ENCODE measurements at regions of chr1 and their contacts with region 1.

Region 1: DNA sequence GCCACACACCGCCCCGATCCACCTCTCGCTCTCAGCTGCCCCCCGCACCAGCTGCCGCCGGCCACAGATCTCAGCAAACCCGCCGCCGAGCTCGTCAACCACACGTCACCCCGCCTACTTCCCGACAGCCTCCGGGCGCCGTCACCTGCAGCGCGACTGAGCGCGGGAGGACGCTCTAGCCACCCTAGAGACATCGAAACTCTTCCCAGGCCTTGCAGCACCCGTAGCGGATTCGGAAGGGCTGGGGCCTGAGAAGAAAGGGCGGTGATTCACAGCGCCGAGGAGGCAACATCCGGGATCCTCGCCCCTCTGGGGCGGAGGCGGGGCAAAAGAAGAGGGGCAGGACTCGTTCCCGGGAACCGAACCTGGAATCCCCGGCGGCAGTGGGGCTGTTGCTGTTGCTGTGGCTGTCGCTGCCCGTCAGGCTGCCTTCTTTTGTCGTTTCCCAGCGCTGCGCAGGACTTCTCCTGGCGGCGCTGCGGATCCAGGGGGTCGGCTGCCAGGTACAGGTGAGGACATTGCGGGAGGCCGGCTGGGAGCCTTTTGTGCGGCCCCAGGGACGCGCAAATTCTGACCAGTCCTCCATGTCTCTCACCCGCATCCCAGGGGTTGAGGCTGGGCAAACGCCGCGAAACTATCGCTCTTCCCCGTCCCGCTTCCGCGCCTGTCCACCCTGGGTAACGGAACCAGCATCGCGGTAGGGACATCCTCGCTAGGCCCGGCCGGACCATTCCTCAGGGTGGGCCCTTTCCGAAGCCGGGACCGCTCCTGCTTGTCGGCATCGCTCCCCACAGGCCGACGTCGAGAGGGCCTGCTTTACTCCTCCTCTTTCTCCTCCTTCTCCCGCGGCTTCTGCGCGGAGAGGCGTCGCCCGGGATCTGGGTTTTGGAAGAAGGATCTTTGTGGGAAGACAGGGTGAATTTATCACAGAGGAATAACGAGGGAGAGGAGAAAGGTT is at the starts of genes RO60 and UCHL5:
- DNase-seq: peak; percentile 97
- H3K4me3 Mint-ChIP-seq: peak within 1 kb of the TSS; percentile 94
- H3K27ac Mint-ChIP-seq: peak within 1 kb of the TSS; percentile 97
- H3K4me1 Mint-ChIP-seq: peaks cover 59% of the 10 kb centered on the region
- H3K27me3 Mint-ChIP-seq: no peaks in the 10 kb centered on the region
- total RNA-seq, gene RO60: 42.8 to 48.0 TPM
- total RNA-seq, gene UCHL5: 63.4 to 68.8 TPM

Region 2: GRCh38 chr1:192639607-192640368 is 419.8 kb before region 1 on chr1:
- CTCF ChIA-PET with region 1: no interaction called
- intact Hi-C with region 1: loop called (anchors 1 kb)
- DNase-seq: peak; percentile 12
- H3K4me3 Mint-ChIP-seq: no peak overlapping the region
- H3K27ac Mint-ChIP-seq: no peak overlapping the region
- H3K4me1 Mint-ChIP-seq: peaks cover 18% of the 10 kb centered on the region
- H3K27me3 Mint-ChIP-seq: peaks cover 7% of the 10 kb centered on the region

Region 3: GRCh38 chr1:192983349-192983980 is 76.1 kb before region 1 on chr1:
- CTCF ChIA-PET with region 1: no interaction called
- intact Hi-C with region 1: loop called (anchors 1 kb)
- DNase-seq: peak; percentile 58
- H3K4me3 Mint-ChIP-seq: no peak overlapping the region
- H3K27ac Mint-ChIP-seq: peak overlapping the region; percentile 67
- H3K4me1 Mint-ChIP-seq: peaks cover 25% of the 10 kb centered on the region
- H3K27me3 Mint-ChIP-seq: no peaks in the 10 kb centered on the region

Region 4: DNA sequence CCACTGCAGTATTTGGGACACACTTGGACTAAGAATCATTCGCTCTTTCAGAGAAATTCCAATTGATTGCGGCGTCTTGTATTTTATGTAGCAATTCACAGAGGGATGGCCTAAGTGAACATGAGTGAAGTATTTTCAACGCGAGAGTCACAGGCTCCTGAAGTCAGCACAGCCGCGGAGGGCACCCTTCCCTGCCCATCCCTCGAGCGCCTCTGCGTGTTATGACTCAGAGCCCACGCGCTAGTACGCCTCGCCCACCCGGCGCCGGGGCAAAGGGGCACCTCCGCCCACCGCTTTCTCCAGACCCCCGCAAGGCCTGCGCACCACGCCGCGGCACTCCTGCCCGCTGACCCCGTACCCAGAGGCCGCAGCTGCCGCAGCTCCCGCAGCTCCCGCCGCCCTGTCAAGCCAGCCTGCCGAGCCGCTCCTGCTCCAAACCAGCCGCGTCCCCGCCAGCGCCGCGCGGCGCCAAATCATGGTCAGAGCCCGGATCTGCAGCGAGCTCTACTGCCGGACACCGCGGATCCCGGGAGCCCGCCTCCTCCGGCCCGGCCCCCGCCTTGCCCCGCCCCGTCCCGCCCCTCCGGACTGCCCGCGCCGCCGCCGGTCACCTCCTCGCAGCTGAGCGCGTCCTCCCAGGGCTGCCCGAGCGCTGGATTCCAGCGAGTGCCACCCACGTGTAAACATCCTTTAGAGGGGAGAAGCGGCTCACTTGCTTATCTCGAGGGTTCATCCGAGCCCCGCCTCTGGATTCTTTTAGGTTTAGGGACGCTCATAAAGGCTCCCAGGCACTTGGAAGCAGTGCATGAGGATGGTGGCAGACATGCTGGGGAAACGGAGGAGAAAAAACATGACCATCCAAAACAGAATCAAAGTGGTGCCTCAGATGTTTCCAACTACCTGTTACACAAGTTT is 45.6 kb after region 1 on chr1 and contains the start of gene GLRX2:
- CTCF ChIA-PET with region 1: interaction called, 3 read pairs
- intact Hi-C with region 1: loop called (anchors 1 kb)
- DNase-seq: peak; percentile 60
- H3K4me3 Mint-ChIP-seq: peak within 1 kb of the TSS; percentile 89
- H3K27ac Mint-ChIP-seq: peak within 1 kb of the TSS; percentile 68
- H3K4me1 Mint-ChIP-seq: peaks cover 19% of the 10 kb centered on the region
- H3K27me3 Mint-ChIP-seq: no peaks in the 10 kb centered on the region
- total RNA-seq, gene GLRX2: 16.5 to 18.5 TPM

Region 5: DNA sequence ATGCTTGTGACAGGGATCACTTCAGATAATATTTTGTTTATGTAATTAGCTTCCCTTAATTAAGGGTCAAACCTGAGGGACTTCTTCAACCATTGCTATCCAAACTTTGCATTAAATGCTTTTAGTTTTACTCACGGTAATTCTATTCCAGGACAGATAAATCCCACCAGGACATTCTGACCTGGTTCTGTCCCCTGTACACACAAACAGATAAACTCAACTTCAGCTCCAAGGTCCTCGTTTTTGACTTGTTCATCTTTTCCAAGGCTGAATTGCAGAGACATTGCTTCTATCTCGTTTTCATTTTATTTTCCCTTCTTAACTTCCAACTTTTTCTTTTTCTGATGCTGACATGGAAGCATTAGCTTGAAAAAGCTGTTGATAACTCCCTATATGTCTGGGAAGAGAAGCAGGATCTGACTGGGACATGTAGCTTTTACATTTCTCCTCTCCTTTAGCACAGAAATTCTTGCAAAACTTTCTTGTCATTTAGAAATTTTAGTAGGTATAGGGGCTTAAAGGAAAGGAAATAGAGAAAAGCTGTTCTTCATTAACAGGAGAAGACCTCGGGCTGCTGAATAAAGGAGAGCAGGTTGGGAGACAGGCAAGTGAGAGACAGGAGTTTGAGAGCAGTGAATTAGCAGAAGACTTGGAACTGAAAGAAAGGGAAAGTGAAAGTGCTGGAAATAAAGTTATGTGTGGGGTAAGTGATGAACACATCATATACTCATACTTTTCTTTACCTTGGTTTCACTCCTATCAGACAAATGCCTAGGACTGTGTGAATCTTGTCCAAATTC is 358.6 kb after region 1 on chr1:
- CTCF ChIA-PET with region 1: no interaction called
- intact Hi-C with region 1: loop called (anchors 1 kb)
- DNase-seq: no peak
- H3K4me3 Mint-ChIP-seq: peak overlapping the region; percentile 52
- H3K27ac Mint-ChIP-seq: peak overlapping the region; percentile 39
- H3K4me1 Mint-ChIP-seq: peaks cover 46% of the 10 kb centered on the region
- H3K27me3 Mint-ChIP-seq: no peaks in the 10 kb centered on the region

Region 6: GRCh38 chr1:194289569-194290266 is 1230.2 kb after region 1 on chr1:
- CTCF ChIA-PET with region 1: no interaction called
- intact Hi-C with region 1: loop called (anchors 1 kb)
- DNase-seq: peak; percentile 81
- H3K4me3 Mint-ChIP-seq: peak overlapping the region; percentile 54
- H3K27ac Mint-ChIP-seq: peak overlapping the region; percentile 59
- H3K4me1 Mint-ChIP-seq: peaks cover 25% of the 10 kb centered on the region
- H3K27me3 Mint-ChIP-seq: no peaks in the 10 kb centered on the region

Measured in activated naive CD4-positive, alpha-beta T cell treated with anti-CD3 and anti-CD28 coated beads for 36 hours (primary cell).